Right ventricle myocardium inferior (tissue), 1 donor: ENCODE measurements at regions of chr11 and their contacts with region 1.

Region 1: GRCh38 chr11:19553683-19554333 is 158.8 kb upstream of the NAV2 start:
- DNase-seq: no peak
- ATAC-seq: peak; percentile 75

Region 2: GRCh38 chr11:19071255-19071654 is 482.6 kb before region 1 on chr11:
- intact Hi-C with region 1: loop called (anchors 1 kb)
- DNase-seq: peak; percentile 71
- ATAC-seq: peak; percentile 93

Region 3: DNA sequence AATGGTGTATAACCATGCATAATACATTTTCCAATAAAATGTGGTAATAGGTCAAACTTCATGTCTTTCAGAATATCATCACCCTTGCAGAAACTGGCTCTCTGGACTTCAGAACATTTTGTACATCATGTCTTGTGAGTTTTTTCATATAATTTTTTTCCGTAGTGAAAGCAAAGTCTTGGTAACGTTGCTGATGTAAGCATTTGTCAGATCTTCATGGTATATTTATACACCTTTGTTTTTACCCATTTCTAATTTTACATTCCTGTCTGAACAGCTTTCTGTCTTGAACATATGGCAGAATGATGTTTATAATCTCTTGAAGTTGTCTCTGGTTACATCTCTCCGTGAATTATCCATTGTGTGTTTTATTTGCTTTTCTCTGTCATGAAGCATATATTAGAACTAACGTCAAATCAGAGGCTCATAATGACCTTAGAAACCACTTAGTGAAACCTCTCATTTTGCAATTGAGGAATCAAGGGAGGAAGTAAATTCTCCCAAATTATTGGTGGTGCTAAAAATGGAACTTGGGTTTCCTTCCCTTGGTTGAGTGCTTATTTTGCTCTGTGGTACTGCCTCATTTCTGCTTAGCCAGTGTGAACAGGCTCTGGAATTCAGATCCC is 389.5 kb before region 1 on chr11:
- intact Hi-C with region 1: loop called (anchors 2 kb)
- DNase-seq: no peak
- ATAC-seq: no peak

Region 4: GRCh38 chr11:19268951-19269350 is 284.9 kb before region 1 on chr11:
- intact Hi-C with region 1: loop called (anchors 5 kb)
- DNase-seq: no peak
- ATAC-seq: no peak

Region 5: GRCh38 chr11:19311308-19312030 is 242.3 kb before region 1 on chr11:
- intact Hi-C with region 1: loop called (anchors 1 kb)
- DNase-seq: peak; percentile 60
- ATAC-seq: peak; percentile 79

Region 6: DNA sequence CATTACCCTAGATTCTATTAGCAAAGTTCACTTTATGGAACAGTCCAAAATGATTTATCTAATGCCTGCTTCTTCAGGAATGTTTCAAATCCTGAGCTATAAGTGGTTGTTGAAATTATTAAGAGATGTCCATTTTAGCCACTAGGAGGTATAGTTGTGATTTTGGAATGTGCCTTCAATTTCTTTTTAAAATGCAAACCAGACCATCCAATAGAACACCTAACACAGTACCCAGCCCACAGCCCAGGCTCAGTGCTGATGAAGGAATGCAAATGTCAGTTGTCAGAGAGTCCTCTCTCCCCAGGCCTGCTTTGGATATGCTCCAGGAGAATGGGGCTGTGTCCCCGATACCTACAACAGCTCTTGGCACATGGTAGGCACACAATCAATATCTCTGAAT is 227.3 kb before region 1 on chr11:
- intact Hi-C with region 1: loop called (anchors 5 kb)
- DNase-seq: no peak
- ATAC-seq: no peak

Region 7: DNA sequence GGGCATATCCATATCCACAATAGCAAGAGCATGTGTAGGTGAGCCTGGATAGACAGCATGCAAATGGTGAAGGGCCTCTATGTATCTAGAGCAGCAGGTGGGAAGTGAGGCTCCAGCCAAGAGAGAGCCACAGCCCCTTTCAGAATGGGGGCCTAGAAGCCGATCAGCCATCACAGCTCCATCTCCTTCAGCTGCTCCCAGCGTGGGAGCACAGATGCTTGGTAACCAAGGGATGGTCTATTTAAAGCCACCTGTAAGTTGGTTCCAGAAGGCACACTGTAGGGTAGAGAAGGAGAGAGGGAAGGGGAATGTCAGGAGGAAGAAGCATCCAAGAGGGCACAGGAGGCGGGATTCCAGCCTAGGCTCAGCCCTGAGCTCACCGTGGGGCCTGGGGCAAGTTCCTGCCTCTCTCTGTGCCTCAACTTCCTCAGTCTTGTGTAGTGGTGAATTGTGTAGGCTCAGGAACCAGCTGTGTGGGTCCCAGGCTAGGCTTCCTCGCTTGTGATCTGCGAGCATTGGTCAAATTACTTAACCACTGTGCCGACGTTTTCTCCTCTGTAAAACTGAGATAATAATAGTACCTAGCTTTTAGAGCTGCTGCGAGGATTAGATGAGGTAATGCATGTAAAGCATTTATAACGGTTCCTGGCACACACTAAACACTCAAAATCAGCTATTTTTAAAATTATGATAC is 35.9 kb after region 1 on chr11:
- intact Hi-C with region 1: no loop called
- DNase-seq: no peak
- ATAC-seq: no peak

Region 8: GRCh38 chr11:19903620-19904069 is 349.8 kb after region 1 on chr11:
- intact Hi-C with region 1: loop called (anchors 2 kb)
- DNase-seq: no peak
- ATAC-seq: no peak